ENCODE measurements at regions of chr2 and their contacts with region 1.

Region 1: GRCh38 chr2:234425619-234426603 is 71.0 kb downstream of the ARL4C start:
- DNase-seq: peak; percentile 61 to 94 (median 79)
- ATAC-seq: peak; percentile 72
- H3K4me3 ChIP-seq: peak overlapping the region in 1 of 2 experiments; percentile 31
- H3K4me3 Mint-ChIP-seq: peak overlapping the region; percentile 74
- H3K27ac ChIP-seq: peak overlapping the region; percentile 83 to 92
- H3K27ac Mint-ChIP-seq: peak overlapping the region; percentile 100
- H3K4me1 ChIP-seq: peaks cover 85% of the 10 kb centered on the region
- H3K4me1 Mint-ChIP-seq: peaks cover 91% of the 10 kb centered on the region
- H3K27me3 ChIP-seq: no peaks in the 10 kb centered on the region
- H3K27me3 Mint-ChIP-seq: no peaks in the 10 kb centered on the region
- CTCF ChIP-seq: no peak

Region 2: GRCh38 chr2:234135720-234136221 is 290.1 kb before region 1 on chr2:
- CTCF ChIA-PET with region 1: interaction called, 7 read pairs
- POLR2A ChIA-PET with region 1: no interaction called
- intact Hi-C with region 1: loop called in 1 of 2 experiments (anchors 5 kb)
- DNase-seq: peak; percentile 16 to 77 (median 48)
- ATAC-seq: peak; percentile 56
- H3K4me3 ChIP-seq: no peak overlapping the region
- H3K4me3 Mint-ChIP-seq: no peak overlapping the region
- H3K27ac ChIP-seq: no peak overlapping the region
- H3K27ac Mint-ChIP-seq: peak overlapping the region; percentile 64
- H3K4me1 ChIP-seq: peaks cover 25% of the 10 kb centered on the region
- H3K4me1 Mint-ChIP-seq: peaks cover 30% of the 10 kb centered on the region
- H3K27me3 ChIP-seq: no peaks in the 10 kb centered on the region
- H3K27me3 Mint-ChIP-seq: no peaks in the 10 kb centered on the region
- CTCF ChIP-seq: peak; percentile 62

Region 3: DNA sequence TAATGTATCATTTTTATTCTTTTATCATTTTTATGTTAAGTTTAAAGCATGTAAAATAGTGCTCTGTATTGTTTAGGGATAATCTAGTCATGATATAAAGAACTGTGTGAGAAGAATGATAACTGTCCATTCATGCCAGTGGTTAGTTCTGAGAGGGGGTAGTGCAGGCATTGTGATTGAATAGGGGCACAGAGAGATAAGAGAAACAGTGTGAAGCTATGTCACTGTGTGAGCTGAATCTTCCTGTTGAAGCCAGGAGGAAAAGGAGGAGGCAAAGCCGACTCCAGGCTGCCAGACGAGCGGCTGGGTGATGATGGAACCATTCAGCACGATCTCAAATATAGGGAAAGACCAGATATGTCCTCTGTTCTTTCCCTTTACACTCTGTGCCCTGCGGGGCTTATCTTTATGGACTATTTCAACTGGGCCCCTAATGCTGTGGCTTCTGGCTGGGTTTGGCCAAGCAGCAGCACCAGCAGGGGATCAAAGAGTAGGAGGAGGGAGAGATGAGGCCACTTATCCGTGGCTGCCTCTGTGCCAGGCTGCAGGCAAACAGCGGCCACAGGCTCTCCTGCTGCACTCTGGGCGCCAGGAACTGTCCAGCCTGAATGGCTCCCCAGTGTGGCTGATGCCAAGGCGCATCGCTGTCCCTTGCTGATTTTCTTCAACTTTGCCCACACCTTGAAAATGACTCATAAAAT is 247.4 kb before region 1 on chr2:
- CTCF ChIA-PET with region 1: no interaction called
- POLR2A ChIA-PET with region 1: no interaction called
- intact Hi-C with region 1: no loop called
- DNase-seq: no peak
- ATAC-seq: no peak
- H3K4me3 ChIP-seq: no peak overlapping the region
- H3K4me3 Mint-ChIP-seq: no peak overlapping the region
- H3K27ac ChIP-seq: no peak overlapping the region
- H3K27ac Mint-ChIP-seq: no peak overlapping the region
- H3K4me1 ChIP-seq: no peaks in the 10 kb centered on the region
- H3K4me1 Mint-ChIP-seq: no peaks in the 10 kb centered on the region
- H3K27me3 ChIP-seq: peaks cover 0 to 2% of the 10 kb centered on the region in 2 experiments
- H3K27me3 Mint-ChIP-seq: peaks cover 2% of the 10 kb centered on the region
- CTCF ChIP-seq: no peak

Region 4: GRCh38 chr2:234374736-234375135 is 51.2 kb before region 1 on chr2:
- CTCF ChIA-PET with region 1: interaction called, 4 read pairs
- POLR2A ChIA-PET with region 1: interaction called, 6 read pairs
- intact Hi-C with region 1: loop called (anchors 5 kb)
- DNase-seq: no peak
- ATAC-seq: no peak
- H3K4me3 ChIP-seq: no peak overlapping the region
- H3K4me3 Mint-ChIP-seq: no peak overlapping the region
- H3K27ac ChIP-seq: no peak overlapping the region
- H3K27ac Mint-ChIP-seq: no peak overlapping the region
- H3K4me1 ChIP-seq: peaks cover 42% of the 10 kb centered on the region
- H3K4me1 Mint-ChIP-seq: peaks cover 51% of the 10 kb centered on the region
- H3K27me3 ChIP-seq: no peaks in the 10 kb centered on the region
- H3K27me3 Mint-ChIP-seq: no peaks in the 10 kb centered on the region
- CTCF ChIP-seq: no peak

Region 5: GRCh38 chr2:234451852-234452625 is 26.1 kb after region 1 on chr2:
- CTCF ChIA-PET with region 1: interaction called, 32 read pairs
- POLR2A ChIA-PET with region 1: interaction called, 77 read pairs
- intact Hi-C with region 1: no loop called
- DNase-seq: peak in 2 of 9 experiments; percentile 29 to 55
- ATAC-seq: peak; percentile 14
- H3K4me3 ChIP-seq: peak overlapping the region; percentile 42 to 81
- H3K4me3 Mint-ChIP-seq: peak overlapping the region; percentile 83
- H3K27ac ChIP-seq: peak overlapping the region; percentile 55 to 91
- H3K27ac Mint-ChIP-seq: peak overlapping the region; percentile 91
- H3K4me1 ChIP-seq: peaks cover 73% of the 10 kb centered on the region
- H3K4me1 Mint-ChIP-seq: peaks cover 79% of the 10 kb centered on the region
- H3K27me3 ChIP-seq: no peaks in the 10 kb centered on the region
- H3K27me3 Mint-ChIP-seq: no peaks in the 10 kb centered on the region
- CTCF ChIP-seq: no peak

Region 6: DNA sequence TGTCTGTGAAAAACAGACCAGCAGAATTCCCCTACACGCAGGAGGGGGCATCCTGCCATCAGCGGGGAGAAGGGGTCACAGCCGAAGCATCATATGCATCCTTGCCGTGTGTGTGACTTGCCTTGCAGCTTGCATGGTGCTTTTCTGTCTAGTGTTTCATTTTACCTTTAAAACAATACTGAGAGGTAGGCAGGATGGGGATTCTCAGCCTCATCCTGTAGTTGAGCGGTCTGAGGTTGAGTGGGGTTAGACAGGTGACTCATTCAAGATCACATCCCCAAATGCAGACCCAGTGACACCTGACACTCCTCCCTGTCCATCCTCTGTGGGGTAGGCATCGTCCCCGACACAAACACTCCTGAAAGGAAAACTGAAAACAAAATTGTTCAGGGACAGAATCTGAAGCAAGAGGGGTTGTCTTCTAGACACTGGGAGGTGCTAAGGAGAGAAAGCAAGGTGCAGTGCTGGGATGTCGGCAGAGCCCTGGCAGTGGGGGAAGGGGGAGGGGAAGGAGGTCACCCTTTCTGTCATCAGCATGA is 63.1 kb after region 1 on chr2:
- CTCF ChIA-PET with region 1: interaction called, 50 read pairs
- POLR2A ChIA-PET with region 1: interaction called, 45 read pairs
- intact Hi-C with region 1: loop called (anchors 1 kb)
- DNase-seq: peak; percentile 43 to 95 (median 77)
- ATAC-seq: peak; percentile 76
- H3K4me3 ChIP-seq: peak overlapping the region; percentile 6 to 32
- H3K4me3 Mint-ChIP-seq: peak overlapping the region; percentile 85
- H3K27ac ChIP-seq: peak overlapping the region; percentile 70 to 89
- H3K27ac Mint-ChIP-seq: peak overlapping the region; percentile 98
- H3K4me1 ChIP-seq: peaks cover 82% of the 10 kb centered on the region
- H3K4me1 Mint-ChIP-seq: peaks cover 89% of the 10 kb centered on the region
- H3K27me3 ChIP-seq: no peaks in the 10 kb centered on the region
- H3K27me3 Mint-ChIP-seq: no peaks in the 10 kb centered on the region
- CTCF ChIP-seq: no peak

Region 7: DNA sequence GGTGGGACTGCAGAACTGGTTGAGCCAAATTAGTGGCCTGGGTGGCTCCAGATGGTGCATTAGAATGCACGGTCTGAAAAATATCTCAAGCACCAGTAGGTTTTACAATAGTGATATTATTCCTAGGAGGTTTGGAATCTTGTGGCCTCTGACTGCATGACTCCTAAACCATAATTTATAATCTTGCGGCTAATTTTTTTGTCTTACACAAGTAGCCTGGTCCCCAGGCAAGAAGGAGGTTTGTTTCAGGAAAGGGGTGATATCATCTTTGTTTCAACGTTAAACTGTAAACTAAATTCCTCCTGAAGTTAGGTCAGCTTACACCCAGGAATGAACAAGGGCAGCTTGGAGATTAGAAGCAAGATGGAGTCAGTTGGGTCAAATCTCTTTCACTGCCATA is 169.9 kb after region 1 on chr2:
- CTCF ChIA-PET with region 1: no interaction called
- POLR2A ChIA-PET with region 1: no interaction called
- intact Hi-C with region 1: no loop called
- DNase-seq: no peak
- ATAC-seq: no peak
- H3K4me3 ChIP-seq: no peak overlapping the region
- H3K4me3 Mint-ChIP-seq: no peak overlapping the region
- H3K27ac ChIP-seq: no peak overlapping the region
- H3K27ac Mint-ChIP-seq: no peak overlapping the region
- H3K4me1 ChIP-seq: no peaks in the 10 kb centered on the region
- H3K4me1 Mint-ChIP-seq: no peaks in the 10 kb centered on the region
- H3K27me3 ChIP-seq: no peaks in the 10 kb centered on the region
- H3K27me3 Mint-ChIP-seq: peaks cover 7% of the 10 kb centered on the region
- CTCF ChIP-seq: no peak

Region 8: DNA sequence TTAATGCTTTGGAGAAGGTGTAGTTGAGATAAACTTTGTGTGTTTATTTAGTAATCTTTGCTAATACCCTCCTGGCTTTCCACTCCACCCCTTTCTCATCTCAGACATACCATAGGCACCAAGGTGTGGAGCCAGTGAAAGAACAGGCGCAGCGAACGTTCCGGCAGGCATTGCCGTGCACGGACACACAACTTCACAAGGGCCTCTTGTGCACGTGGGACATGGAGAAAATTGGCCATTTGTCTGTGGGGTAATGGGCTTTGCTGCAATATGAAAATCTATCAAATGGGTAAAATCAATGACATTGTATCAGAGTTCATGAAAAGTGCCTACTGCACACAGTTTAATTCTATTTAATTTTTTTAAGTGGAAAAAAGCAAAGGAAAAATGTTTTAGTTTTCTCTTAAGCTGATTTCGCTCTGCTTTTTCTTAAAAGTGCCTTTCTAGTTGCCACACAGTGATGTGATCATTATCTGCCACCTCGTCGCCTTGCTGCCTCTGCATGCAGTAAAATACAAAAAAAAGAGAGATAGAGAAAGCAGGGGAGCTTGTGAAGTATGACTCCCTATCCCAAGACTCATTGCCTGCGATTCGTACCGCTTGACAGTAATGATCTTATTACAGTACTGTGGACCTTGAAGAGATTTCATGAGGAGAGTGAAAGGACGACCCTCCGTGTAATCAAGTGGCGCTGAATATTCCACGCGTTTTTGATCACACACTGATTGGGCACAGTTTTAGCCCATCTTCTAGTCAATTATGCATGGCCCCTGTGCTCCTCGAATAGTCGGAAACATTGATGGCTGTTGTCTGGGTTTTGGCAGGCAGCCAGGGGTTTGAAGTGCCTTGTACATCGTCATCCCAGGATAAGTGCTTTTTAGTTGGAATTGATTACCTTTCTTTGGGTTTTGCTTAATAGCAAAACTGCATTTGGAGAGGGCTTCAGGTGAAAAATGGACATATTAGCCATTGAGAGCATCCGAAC is 1553.8 kb after region 1 on chr2:
- CTCF ChIA-PET with region 1: no interaction called
- POLR2A ChIA-PET with region 1: no interaction called
- intact Hi-C with region 1: no loop called
- DNase-seq: no peak
- ATAC-seq: no peak
- H3K4me3 ChIP-seq: no peak overlapping the region
- H3K4me3 Mint-ChIP-seq: no peak overlapping the region
- H3K27ac ChIP-seq: no peak overlapping the region
- H3K27ac Mint-ChIP-seq: no peak overlapping the region
- H3K4me1 ChIP-seq: no peaks in the 10 kb centered on the region
- H3K4me1 Mint-ChIP-seq: no peaks in the 10 kb centered on the region
- H3K27me3 ChIP-seq: no peaks in the 10 kb centered on the region
- H3K27me3 Mint-ChIP-seq: peaks cover 6% of the 10 kb centered on the region
- CTCF ChIP-seq: no peak

Measured in CD8-positive, alpha-beta T cell (primary cell).